Ovary (tissue), 10 donors: ENCODE measurements at regions of chr12 and their contacts with region 1.

Region 1: GRCh38 chr12:131229426-131230339 is 276.0 kb downstream of the ADGRD1 start:
- DNase-seq: peak in 2 of 5 donors; percentile 44 to 52
- H3K4me3 ChIP-seq: no peak overlapping the region
- H3K27ac ChIP-seq: no peak overlapping the region
- H3K4me1 ChIP-seq: no peaks in the 10 kb centered on the region
- H3K27me3 ChIP-seq: no peaks in the 10 kb centered on the region
- CTCF ChIP-seq: no peak
- EP300 ChIP-seq: no peak
- POLR2A ChIP-seq: no peak

Region 2: DNA sequence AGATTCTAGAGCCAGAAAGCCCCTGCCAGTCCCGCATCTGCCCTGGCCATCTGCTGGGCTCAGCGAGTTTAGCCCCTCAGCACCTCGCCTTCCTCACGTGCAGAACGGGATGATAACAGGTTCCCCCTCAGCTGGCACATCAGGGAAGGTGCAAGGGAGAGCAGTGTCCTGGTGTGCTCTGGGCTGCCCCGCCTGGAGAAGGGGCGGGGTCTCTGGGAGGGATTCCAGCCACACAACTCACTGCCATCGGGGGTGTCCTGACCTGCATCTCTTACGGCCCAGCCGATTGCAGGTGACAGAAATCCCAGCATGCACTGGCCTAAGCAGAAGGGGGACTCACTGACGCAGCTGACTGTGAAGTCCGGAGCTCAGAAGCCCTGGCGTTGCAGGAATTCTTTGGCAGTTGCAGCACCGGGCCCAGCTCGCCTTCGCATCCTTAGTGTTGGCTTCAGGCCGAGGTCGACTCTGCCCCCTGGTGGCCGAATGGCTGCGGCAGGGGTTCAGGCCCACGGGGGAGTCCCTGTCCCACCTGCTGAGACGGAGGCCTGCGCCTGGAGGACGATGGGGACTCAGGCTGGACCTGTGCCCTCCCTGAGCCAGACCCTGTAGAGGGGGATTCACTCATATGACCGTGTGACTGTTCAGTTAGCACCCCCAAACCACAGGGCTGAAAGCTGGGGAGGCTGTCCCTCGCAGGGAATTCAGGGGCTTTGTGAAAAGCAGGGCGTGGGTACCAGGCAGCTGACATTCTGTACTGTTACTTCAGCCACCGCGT is 97.4 kb before region 1 on chr12:
- intact Hi-C with region 1: no loop called
- DNase-seq: peak; percentile 79 to 91 (median 84)
- H3K4me3 ChIP-seq: no peak overlapping the region
- H3K27ac ChIP-seq: peak overlapping the region; percentile 45 to 60
- H3K4me1 ChIP-seq: peaks cover 1% of the 10 kb centered on the region
- H3K27me3 ChIP-seq: no peaks in the 10 kb centered on the region
- CTCF ChIP-seq: peak; percentile 67 to 83 (median 70)
- EP300 ChIP-seq: no peak
- POLR2A ChIP-seq: no peak

Region 3: DNA sequence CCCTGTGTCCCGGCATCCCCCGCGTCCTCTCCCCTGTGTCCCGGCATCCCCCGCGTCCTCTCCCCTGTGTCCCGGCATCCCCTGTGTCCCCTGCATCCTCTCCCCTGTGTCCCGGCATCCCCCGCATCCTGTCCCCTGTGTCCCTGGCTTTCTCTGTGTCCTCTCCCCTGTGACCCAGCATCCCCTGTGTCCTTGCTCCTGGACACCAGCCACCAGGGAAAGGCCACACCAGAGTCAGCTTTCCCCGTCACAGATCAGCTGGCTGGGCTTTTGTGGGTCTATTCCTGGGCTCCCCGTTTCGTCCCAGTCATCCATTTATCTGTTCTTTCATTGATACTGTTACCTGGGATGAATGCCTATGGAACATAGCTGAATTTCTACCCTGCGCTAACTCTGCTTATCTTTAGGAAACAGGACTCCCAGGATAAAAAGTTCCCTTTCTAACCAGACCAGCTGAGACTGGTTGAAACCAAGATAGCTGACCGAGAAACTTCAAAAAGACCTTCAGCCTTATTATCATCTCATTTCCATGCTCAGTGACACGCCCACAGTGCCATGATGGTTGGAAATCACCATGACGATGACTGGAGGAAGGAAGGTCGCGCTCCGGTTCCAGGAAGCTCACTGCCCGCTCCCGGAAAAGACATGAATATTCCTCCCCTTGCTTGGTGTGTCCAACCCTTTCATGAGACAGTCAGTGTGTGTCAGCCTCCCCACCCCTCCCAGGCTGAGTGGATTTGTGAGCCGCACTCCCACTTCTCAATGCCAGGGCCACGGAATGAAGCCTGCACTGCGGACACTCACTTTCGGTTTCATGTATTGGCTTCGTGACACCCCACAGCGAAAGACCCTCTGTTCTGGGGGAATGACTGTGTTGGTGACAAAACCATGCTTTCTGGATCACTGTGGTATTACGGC is 204.8 kb after region 1 on chr12:
- intact Hi-C with region 1: loop called in 1 of 4 experiments (anchors 5 kb)
- DNase-seq: no peak
- H3K4me3 ChIP-seq: no peak overlapping the region
- H3K27ac ChIP-seq: no peak overlapping the region
- H3K4me1 ChIP-seq: no peaks in the 10 kb centered on the region
- H3K27me3 ChIP-seq: no peaks in the 10 kb centered on the region
- CTCF ChIP-seq: no peak
- EP300 ChIP-seq: no peak
- POLR2A ChIP-seq: no peak